Heart left ventricle (tissue), 16 donors: ENCODE measurements at regions of chr6 and their contacts with region 1.

Region 1: DNA sequence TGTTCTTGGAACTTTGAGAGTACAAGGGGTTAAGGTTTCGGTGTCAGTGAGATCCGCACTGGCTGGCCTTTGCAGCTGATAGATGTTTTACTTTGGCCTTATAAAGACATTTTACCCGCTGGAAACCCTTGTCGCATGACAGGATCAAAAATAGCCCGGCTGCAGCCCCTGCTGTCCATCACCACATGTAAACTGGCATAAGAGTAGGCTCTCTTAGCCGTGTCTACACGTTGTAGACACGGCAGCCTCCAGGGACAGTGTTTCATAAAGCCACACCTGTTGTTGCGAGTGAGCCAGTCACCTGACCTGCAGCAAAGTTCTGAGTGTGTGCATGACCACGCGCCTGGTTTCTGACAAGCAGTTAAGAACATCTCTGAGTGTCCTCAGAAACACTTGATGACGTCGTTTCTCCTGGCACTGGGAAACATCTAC is 8.5 kb downstream of the RBM24 start:
- DNase-seq: peak in 4 of 5 donors; percentile 67 to 87 (median 80)
- ATAC-seq: peak; percentile 89 to 94 (median 91)
- H3K4me3 ChIP-seq: peak overlapping the region in 10 of 12 donors; percentile 7 to 45 (median 35)
- H3K27ac ChIP-seq: peak overlapping the region; percentile 73 to 94 (median 80)
- H3K4me1 ChIP-seq: peaks cover 0 to 38% (median 8%) of the 10 kb centered on the region in 12 donors
- H3K27me3 ChIP-seq: no peaks in the 10 kb centered on the region
- CTCF ChIP-seq: no peak
- POLR2A ChIP-seq: peak in 1 of 2 donors; percentile 33

Region 2: GRCh38 chr6:17167327-17167979 is 122.2 kb before region 1 on chr6:
- intact Hi-C with region 1: loop called in 7 of 10 experiments (anchors 5 to 10 kb)
- DNase-seq: peak in 4 of 5 donors; percentile 54 to 76 (median 66)
- ATAC-seq: peak; percentile 84 to 97 (median 96)
- H3K4me3 ChIP-seq: no peak overlapping the region
- H3K27ac ChIP-seq: peak overlapping the region in 5 of 12 donors; percentile 6 to 59 (median 26)
- H3K4me1 ChIP-seq: peaks cover 0 to 10% (median 0%) of the 10 kb centered on the region in 12 donors
- H3K27me3 ChIP-seq: no peaks in the 10 kb centered on the region
- CTCF ChIP-seq: peak in 11 of 12 donors; percentile 32 to 63 (median 52)
- POLR2A ChIP-seq: no peak

Region 3: GRCh38 chr6:17417817-17418216 is 128.2 kb after region 1 on chr6:
- intact Hi-C with region 1: loop called in 1 of 10 experiments (anchors 5 kb)
- DNase-seq: no peak
- ATAC-seq: peak in 2 of 4 donors; percentile 23 to 31
- H3K4me3 ChIP-seq: peak overlapping the region in 3 of 12 donors; percentile 21 to 25 (median 22)
- H3K27ac ChIP-seq: peak overlapping the region; percentile 49 to 88 (median 74)
- H3K4me1 ChIP-seq: peaks cover 0 to 46% (median 14%) of the 10 kb centered on the region in 12 donors
- H3K27me3 ChIP-seq: no peaks in the 10 kb centered on the region
- CTCF ChIP-seq: no peak
- POLR2A ChIP-seq: no peak

Region 4: GRCh38 chr6:17484201-17484849 is 194.7 kb after region 1 on chr6:
- intact Hi-C with region 1: loop called in 4 of 10 experiments (anchors 5 to 10 kb)
- DNase-seq: peak in 3 of 5 donors; percentile 28 to 42 (median 41)
- ATAC-seq: peak; percentile 23 to 87 (median 56)
- H3K4me3 ChIP-seq: no peak overlapping the region
- H3K27ac ChIP-seq: peak overlapping the region in 11 of 12 donors; percentile 9 to 81 (median 64)
- H3K4me1 ChIP-seq: peaks cover 0 to 42% (median 0%) of the 10 kb centered on the region in 12 donors
- H3K27me3 ChIP-seq: no peaks in the 10 kb centered on the region
- CTCF ChIP-seq: no peak
- POLR2A ChIP-seq: no peak